Sigmoid colon (tissue), 7 donors: ENCODE measurements at regions of chr3 and their contacts with region 1.

Region 1: DNA sequence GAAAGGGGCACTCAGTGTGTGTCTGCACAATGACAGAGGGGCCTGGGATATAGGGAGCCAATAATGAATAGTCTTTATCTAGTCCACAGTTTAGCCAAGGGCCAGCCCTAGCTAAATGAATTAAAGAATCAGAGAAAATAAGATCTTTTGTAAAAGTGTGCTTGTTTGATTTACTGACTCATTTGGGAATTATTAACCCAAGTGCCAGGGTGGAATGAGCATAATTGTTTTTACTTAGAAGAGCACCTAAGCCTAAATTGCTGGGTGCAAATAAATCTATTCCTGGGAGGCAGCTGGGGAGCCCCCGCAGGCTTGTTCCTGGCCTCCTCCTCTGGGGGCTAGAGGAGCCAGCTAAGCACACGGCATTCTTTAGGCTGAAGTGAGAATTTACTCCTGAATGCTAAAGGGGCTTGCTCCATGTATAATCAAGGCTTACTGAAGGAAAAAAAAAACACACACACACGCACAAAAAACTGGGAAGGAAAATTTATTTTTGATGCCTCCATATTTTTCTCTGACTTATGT is 405.3 kb upstream of the SUCLG2 start:
- DNase-seq: no peak
- H3K4me3 ChIP-seq: no peak overlapping the region
- H3K27ac ChIP-seq: no peak overlapping the region
- H3K4me1 ChIP-seq: no peaks in the 10 kb centered on the region
- H3K27me3 ChIP-seq: no peaks in the 10 kb centered on the region
- CTCF ChIP-seq: no peak
- EP300 ChIP-seq: no peak
- POLR2A ChIP-seq: no peak

Region 2: DNA sequence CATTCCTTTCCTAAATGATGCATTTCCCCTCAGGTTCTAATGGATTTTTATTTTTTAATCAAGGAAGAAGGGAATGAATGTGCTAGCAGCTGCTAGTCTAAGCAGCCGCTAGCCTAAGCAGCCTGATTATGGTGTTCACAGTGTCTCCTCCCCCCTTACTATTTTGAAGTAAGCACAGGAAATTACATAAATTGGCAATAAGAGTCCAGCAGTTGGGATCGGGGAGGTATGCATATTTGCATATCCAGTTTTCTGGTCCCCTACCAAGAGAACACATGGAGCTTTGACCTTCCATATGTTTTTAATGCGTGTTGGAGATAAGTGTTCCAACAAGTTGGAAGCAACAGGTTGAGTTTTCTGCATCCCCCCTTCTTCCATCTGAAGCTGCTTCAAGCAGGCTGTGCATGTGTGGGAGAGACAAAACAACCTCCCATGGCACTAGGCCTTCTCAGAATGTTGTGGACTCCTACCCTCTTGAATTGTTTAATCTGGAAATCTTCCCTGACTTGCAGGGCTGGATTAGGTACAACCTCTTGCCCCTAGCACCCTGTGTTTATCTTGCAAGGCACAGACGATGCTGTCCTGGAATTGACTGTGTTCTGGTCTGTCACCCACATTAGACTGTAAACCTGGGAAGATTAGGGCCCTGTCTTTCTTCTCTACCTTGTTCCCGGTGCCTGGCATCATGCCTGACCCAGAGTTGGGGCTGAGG is 1434.0 kb before region 1 on chr3:
- intact Hi-C with region 1: no loop called
- DNase-seq: no peak
- H3K4me3 ChIP-seq: no peak overlapping the region
- H3K27ac ChIP-seq: peak overlapping the region in 3 of 4 donors; percentile 42 to 59 (median 56)
- H3K4me1 ChIP-seq: peaks cover 0 to 24% (median 19%) of the 10 kb centered on the region in 4 donors
- H3K27me3 ChIP-seq: no peaks in the 10 kb centered on the region
- CTCF ChIP-seq: no peak
- EP300 ChIP-seq: no peak
- POLR2A ChIP-seq: no peak

Region 3: GRCh38 chr3:68116580-68116979 is 56.9 kb after region 1 on chr3:
- intact Hi-C with region 1: loop called (anchors 10 kb)
- DNase-seq: no peak
- H3K4me3 ChIP-seq: no peak overlapping the region
- H3K27ac ChIP-seq: no peak overlapping the region
- H3K4me1 ChIP-seq: no peaks in the 10 kb centered on the region
- H3K27me3 ChIP-seq: no peaks in the 10 kb centered on the region
- CTCF ChIP-seq: no peak
- EP300 ChIP-seq: no peak
- POLR2A ChIP-seq: no peak